Mucosa of descending colon (tissue), 3 donors: ENCODE measurements at regions of chr11 and their contacts with region 1.

Region 1: DNA sequence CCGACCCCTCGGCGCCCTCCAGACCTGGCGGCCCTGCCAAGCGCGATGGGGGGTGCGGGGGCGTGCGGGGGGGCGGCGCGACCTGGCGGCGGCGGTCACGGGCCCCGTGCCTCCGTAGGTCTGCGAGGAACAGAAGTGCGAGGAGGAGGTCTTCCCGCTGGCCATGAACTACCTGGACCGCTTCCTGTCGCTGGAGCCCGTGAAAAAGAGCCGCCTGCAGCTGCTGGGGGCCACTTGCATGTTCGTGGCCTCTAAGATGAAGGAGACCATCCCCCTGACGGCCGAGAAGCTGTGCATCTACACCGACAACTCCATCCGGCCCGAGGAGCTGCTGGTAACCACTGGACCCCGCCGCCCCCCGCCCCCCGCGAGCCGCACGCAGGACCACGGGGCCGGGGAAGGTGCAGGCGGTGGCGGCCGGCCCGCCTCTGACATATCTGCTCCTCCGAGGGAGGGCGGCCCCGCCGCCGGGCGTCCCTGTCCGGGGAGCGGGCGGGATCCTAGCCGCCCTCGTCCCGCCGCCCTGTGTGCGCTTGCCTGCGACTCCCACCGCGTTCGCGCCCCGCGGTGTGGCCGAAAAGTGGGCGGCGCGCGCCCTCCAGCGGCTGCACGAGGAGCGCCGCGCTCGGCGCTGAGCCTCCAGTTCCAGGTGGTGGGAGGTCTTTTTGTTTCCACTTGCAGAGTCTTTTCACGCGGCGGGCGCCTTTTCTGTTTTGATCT is 2.1 kb downstream of the CCND1 start:
- DNase-seq: peak; percentile 79 to 90 (median 87)
- ATAC-seq: peak; percentile 73
- H3K4me3 ChIP-seq: peak overlapping the region; percentile 50
- H3K4me1 ChIP-seq: peaks cover 44% of the 10 kb centered on the region
- CTCF ChIP-seq: peak; percentile 95

Region 2: GRCh38 chr11:69101115-69101791 is 541.8 kb before region 1 on chr11:
- intact Hi-C with region 1: loop called (anchors 5 to 10 kb)
- DNase-seq: peak; percentile 81 to 90 (median 87)
- ATAC-seq: peak; percentile 95
- H3K4me3 ChIP-seq: no peak overlapping the region
- H3K4me1 ChIP-seq: no peaks in the 10 kb centered on the region
- CTCF ChIP-seq: peak; percentile 97

Region 3: DNA sequence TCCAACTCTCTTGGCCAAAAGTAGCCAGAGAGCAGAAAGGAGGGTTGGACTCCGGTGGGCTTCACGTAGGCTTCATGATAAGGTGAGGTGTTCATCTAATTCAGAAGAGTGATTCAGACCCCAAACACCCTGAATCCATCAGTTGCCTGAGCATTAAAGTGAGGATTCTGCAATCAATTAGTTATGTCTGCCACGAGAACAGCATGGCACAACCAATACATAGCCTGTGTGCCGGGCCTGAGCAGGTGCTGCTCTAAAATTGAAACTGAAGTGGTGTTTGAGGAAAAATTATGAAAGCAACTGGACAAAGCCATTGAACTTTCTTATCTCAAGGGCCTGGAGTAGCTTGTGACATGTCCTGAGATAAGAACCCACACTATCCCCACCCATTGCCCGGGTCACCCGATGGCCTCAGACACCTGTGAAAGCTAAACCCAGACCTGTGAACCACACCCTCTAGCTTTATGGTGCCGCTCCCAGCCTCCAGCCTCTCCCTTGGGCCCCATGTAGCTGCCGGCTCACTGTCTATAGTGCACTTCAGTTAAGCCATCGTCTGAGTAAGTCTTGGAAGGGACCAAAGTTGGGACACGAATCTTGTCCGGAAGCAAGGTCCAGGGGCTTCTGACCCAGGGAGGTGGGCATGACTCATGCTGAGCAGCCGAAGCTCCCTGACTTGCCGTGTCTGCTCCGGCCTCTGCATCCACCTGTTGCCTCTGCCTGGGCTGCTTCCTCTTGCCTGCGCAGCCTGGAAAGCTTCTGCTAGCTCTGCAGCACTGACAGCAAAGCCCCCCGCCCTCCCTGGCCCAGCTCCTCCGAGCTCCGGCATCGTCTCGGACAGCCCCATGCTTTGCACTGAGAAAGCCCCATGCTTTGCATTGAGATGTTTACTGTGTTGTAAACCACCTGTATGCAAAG is 354.8 kb before region 1 on chr11:
- intact Hi-C with region 1: loop called in 1 of 2 experiments (anchors 5 kb)
- DNase-seq: peak; percentile 90 to 95 (median 93)
- ATAC-seq: peak; percentile 94
- H3K4me3 ChIP-seq: no peak overlapping the region
- H3K4me1 ChIP-seq: peaks cover 41% of the 10 kb centered on the region
- CTCF ChIP-seq: no peak